ENCODE measurements at regions of chr12 and their contacts with region 1.

Region 1: DNA sequence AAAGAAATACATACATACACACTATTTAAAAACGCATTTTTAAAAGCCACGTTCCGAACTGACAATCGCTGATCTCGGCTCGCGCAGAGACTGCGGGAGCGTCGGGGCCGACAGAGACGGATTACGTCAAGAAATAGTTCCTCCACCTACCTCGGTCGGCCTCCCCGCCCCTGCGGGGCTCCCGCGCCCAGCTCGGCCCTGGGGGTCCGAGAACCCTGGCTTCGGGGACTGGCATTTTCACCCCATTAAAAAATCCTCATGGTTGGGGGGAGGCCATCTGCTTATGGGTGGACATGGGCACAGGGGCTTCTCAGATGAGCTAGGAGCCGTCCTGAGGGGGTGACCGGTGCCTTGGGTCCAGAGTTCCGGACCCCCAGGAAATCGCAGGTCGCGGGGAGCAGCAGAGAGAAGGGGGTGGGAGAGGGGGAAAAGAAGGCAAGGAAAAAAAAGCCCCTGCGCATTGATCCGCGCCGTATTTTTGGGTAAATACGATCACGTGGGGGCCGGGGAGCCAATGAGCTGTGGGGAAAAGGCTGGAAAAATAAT is 329 bp upstream of the HOXC9 start:
- DNase-seq: peak; percentile 90
- H3K4me3 Mint-ChIP-seq: peak overlapping the region; percentile 89
- H3K27ac Mint-ChIP-seq: peak overlapping the region; percentile 97
- H3K4me1 Mint-ChIP-seq: peaks cover 12% of the 10 kb centered on the region
- H3K27me3 Mint-ChIP-seq: no peaks in the 10 kb centered on the region
- CTCF ChIP-seq: no peak

Region 2: DNA sequence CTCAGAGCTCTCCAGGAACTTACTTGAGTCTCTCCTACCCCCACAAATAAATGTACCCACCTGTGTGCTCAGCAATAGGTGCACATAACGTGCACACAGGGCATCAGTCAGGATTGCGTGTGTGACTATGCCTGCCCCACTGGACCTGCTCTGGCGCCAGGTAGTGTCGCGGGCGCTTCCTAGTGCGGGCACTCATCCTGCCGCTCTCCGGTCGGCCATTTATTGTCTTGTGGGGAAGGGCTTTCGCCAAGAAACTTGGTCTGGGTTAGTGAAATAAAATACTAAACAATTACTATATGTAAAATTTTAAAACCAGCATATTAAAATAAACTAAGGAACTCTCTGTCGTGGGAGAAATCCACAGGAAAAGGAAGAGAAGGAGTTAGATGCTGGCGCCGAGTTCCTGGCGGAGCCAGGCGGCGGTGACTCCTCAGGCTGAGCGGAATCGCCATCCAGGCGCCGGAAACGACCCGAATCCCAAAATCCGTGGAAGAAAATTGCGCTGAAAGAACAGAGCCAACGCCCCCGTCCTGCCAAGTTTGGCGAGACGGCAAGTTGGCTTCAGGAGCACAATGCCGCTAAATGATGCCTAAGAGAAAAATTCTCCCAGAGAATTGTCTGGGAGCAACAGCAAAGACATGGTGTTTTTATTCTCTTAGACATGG is 68.9 kb before region 1 on chr12:
- CTCF ChIA-PET with region 1: no interaction called
- POLR2A ChIA-PET with region 1: no interaction called
- intact Hi-C with region 1: no loop called
- DNase-seq: no peak
- H3K4me3 Mint-ChIP-seq: no peak overlapping the region
- H3K27ac Mint-ChIP-seq: no peak overlapping the region
- H3K4me1 Mint-ChIP-seq: no peaks in the 10 kb centered on the region
- H3K27me3 Mint-ChIP-seq: peaks cover 67% of the 10 kb centered on the region
- CTCF ChIP-seq: no peak

Region 3: GRCh38 chr12:53974084-53975063 is 25.3 kb before region 1 on chr12 and contains the start of gene HOTAIR:
- CTCF ChIA-PET with region 1: interaction called, 3 read pairs
- POLR2A ChIA-PET with region 1: interaction called, 17 read pairs
- intact Hi-C with region 1: no loop called
- DNase-seq: peak; percentile 60
- H3K4me3 Mint-ChIP-seq: peak within 1 kb of the TSS; percentile 88
- H3K27ac Mint-ChIP-seq: peak within 1 kb of the TSS; percentile 88
- H3K4me1 Mint-ChIP-seq: peaks cover 19% of the 10 kb centered on the region
- H3K27me3 Mint-ChIP-seq: no peaks in the 10 kb centered on the region
- CTCF ChIP-seq: no peak
- total RNA-seq, gene HOTAIR: 1.5 and 2.0 TPM in 2 replicates

Region 4: DNA sequence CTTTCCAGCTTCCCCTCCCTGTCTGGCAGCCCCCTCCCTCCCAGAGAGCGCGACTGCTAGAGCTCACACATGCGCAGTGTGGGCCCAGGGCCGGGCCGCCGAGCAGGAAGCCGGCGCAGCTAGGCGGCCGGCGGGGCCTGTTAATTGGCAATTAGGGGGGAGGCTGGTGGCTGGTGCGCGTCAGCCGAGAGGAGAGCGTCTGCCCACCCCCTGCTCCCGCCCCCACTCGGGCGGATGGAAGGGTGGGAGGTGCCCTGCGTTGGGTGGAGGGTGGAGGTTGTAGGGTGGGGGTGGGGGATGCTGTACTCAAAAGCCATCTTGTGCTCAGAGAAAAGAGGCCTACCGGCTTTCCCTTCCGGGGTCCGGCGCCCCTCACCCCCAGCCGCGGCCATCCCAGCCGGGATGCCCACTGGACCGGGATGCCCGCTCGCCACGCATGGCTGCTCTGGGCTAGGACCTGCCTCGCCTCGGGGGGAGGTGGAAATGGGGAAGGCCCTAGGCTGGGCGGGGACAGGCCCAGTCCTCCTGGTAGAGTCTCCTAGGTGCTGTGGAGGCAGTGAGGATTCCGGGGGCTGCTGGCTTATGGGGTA is 18.3 kb after region 1 on chr12:
- CTCF ChIA-PET with region 1: interaction called, 5 read pairs
- POLR2A ChIA-PET with region 1: interaction called, 37 read pairs
- intact Hi-C with region 1: no loop called
- DNase-seq: peak; percentile 96
- H3K4me3 Mint-ChIP-seq: peak overlapping the region; percentile 98
- H3K27ac Mint-ChIP-seq: peak overlapping the region; percentile 98
- H3K4me1 Mint-ChIP-seq: peaks cover 23% of the 10 kb centered on the region
- H3K27me3 Mint-ChIP-seq: no peaks in the 10 kb centered on the region
- CTCF ChIP-seq: no peak

Measured in MCF 10A (cell line).